ENCODE measurements at regions of chr1 and their contacts with region 1.

Region 1: DNA sequence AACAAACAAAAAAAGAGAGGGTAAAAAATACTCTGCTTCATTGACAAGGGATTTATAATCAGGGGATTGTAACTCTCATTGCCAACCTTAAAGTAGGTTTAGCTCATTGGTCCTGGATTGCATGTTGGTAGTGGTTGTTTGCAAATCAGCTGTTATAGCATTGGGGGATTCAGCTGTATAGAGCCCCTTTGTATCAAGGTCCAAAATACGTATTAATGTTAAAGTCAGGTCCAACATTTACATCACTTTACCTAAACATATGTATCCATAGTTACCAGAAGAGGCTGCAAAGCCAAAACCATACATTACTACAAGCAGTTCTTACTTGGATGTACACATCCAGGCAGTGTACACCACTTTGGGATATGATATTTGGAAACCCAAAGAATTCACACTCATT is 29.4 kb downstream of the RPS27 start:
- H3K4me3 Mint-ChIP-seq: no peak overlapping the region
- H3K27ac Mint-ChIP-seq: no peak overlapping the region
- H3K4me1 Mint-ChIP-seq: no peaks in the 10 kb centered on the region
- H3K27me3 Mint-ChIP-seq: no peaks in the 10 kb centered on the region

Region 2: DNA sequence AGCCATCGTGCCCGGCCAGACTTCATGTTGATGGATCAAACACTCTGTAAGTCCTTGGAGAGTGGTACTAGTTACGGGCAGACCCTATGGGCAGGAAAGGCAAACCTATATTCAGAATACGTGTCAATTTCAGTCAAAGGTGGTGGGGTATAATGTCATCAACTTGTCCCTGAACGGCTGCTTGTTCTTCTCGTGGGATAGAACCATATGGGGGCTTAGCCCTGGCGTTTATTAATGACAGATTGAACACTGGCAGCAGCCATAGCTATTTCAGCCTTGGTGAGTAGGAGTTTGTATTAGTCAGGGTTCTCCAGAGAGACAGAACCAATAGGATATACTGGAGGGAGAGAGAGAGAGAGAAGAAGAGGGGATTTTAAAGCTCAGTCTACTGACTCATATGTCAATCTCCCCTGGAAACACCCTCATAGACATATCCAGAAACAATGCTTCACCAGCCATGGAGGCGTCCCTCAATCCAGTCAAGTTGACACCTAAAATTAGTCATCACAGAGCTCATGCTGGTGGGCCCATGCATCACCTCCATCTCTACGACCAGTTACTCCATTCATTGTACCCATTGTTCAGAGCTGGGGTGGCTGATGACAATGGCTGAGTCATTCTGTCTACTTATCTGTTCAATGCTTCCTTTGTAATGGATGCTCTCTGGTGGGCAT is 284.9 kb after region 1 on chr1:
- intact Hi-C with region 1: loop called (anchors 10 kb)
- H3K4me3 Mint-ChIP-seq: no peak overlapping the region
- H3K27ac Mint-ChIP-seq: no peak overlapping the region
- H3K4me1 Mint-ChIP-seq: no peaks in the 10 kb centered on the region
- H3K27me3 Mint-ChIP-seq: peaks cover 8% of the 10 kb centered on the region

Measured in dendritic cell treated with granulocyte-macrophage colony-stimulating factor and Interleukin-4, amounts not matched to agents 40 ng/mL and 50 ng/mL, for 4 days (primary cell).